Caco-2 (cell line): ENCODE measurements at regions of chr5 and their contacts with region 1.

Region 1: GRCh38 chr5:95864944-95865504 is 42.5 kb upstream of the GLRX start:
- DNase-seq: peak; percentile 75 to 88
- H3K4me3 ChIP-seq: no peak overlapping the region
- H3K4me3 Mint-ChIP-seq: peak overlapping the region; percentile 6
- H3K27ac Mint-ChIP-seq: peak overlapping the region; percentile 77
- H3K4me1 ChIP-seq: peaks cover 53% of the 10 kb centered on the region
- H3K4me1 Mint-ChIP-seq: peaks cover 39% of the 10 kb centered on the region
- H3K27me3 ChIP-seq: no peaks in the 10 kb centered on the region
- H3K27me3 Mint-ChIP-seq: no peaks in the 10 kb centered on the region
- CTCF ChIP-seq: no peak

Region 2: DNA sequence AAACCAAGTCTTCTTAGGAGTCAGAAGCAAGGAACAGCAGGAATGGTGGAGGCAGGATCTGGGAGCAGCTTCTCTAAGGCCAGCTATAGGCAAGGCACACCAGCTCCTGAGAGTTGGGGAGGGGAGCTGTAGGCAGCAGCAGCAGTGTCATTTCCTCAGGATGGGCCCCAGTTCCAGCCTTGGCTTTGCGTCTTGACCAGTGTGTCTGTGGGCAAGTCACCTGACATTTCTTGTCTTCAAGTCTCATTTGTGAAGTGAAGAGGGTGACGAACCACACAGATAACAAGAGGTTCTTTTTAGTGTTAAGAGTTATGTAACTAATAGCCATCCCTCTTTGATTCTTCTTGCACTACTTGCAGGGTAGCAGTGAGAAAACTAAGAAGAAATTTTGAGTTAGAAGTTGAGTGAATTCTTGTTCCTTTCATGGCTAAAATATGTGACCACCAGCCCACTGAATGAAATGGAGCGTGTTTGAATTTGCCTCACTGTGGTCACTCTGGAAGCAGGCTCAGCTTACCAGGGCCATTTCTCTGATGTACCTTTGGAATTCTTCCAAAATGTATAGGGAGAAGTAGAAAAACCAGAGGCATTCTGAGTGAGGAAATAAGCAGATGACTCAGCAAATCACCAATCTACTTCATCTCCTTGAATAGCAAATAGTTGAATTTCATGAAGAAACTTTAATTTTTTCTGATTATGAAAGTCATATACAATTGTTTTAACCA is 91.5 kb before region 1 on chr5:
- CTCF ChIA-PET with region 1: no interaction called
- POLR2A ChIA-PET with region 1: no interaction called
- intact Hi-C with region 1: no loop called
- DNase-seq: no peak
- H3K4me3 ChIP-seq: no peak overlapping the region
- H3K4me3 Mint-ChIP-seq: no peak overlapping the region
- H3K27ac Mint-ChIP-seq: no peak overlapping the region
- H3K4me1 ChIP-seq: no peaks in the 10 kb centered on the region
- H3K4me1 Mint-ChIP-seq: no peaks in the 10 kb centered on the region
- H3K27me3 ChIP-seq: no peaks in the 10 kb centered on the region
- H3K27me3 Mint-ChIP-seq: no peaks in the 10 kb centered on the region
- CTCF ChIP-seq: no peak

Region 3: GRCh38 chr5:95784514-95785302 is 80.3 kb before region 1 on chr5:
- CTCF ChIA-PET with region 1: no interaction called
- POLR2A ChIA-PET with region 1: no interaction called
- intact Hi-C with region 1: no loop called
- DNase-seq: no peak
- H3K4me3 ChIP-seq: no peak overlapping the region
- H3K4me3 Mint-ChIP-seq: no peak overlapping the region
- H3K27ac Mint-ChIP-seq: no peak overlapping the region
- H3K4me1 ChIP-seq: no peaks in the 10 kb centered on the region
- H3K4me1 Mint-ChIP-seq: peaks cover 6% of the 10 kb centered on the region
- H3K27me3 ChIP-seq: no peaks in the 10 kb centered on the region
- H3K27me3 Mint-ChIP-seq: no peaks in the 10 kb centered on the region
- CTCF ChIP-seq: no peak

Region 4: DNA sequence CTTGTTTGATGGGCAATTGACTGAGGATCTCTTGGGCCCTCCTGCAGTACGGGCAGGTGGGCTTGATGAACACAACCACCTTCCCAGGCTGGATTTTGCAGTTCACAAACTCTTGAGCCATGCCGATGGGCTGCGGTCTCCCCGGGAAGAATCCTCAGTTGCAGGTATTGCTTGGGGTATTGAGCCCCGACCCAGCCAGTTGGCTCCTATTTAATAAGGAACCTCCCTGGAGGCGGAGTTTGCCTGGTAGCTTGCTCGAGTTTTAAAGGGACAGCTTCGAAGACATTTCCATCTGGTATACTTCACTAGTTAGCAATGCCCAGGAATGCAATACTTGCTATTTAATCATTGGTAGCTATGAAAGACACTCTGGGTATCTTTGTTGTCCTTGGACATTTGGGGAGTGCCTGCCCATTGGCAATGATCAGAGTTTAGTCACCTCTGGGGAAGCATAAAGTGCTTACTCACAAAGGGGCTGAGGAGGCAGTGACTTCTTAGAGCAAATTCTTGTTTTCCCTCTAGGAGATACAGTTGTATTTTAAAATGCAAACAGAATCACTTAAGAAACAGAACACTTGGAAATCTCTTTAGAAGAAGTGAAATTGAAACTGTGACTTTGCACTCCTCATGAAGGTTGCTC is 42.4 kb before region 1 on chr5 and contains the start of gene GLRX:
- CTCF ChIA-PET with region 1: no interaction called
- POLR2A ChIA-PET with region 1: no interaction called
- intact Hi-C with region 1: no loop called
- DNase-seq: peak; percentile 69 to 70
- H3K4me3 ChIP-seq: peak within 1 kb of the TSS; percentile 59
- H3K4me3 Mint-ChIP-seq: peak within 1 kb of the TSS; percentile 82
- H3K27ac Mint-ChIP-seq: peak within 1 kb of the TSS; percentile 63
- H3K4me1 ChIP-seq: peaks cover 34% of the 10 kb centered on the region
- H3K4me1 Mint-ChIP-seq: peaks cover 21% of the 10 kb centered on the region
- H3K27me3 ChIP-seq: no peaks in the 10 kb centered on the region
- H3K27me3 Mint-ChIP-seq: no peaks in the 10 kb centered on the region
- CTCF ChIP-seq: no peak
- total RNA-seq, gene GLRX: 17.9 and 26.4 TPM in 2 replicates

Region 5: GRCh38 chr5:95878417-95879323 is 13.6 kb after region 1 on chr5:
- CTCF ChIA-PET with region 1: interaction called, 9 read pairs
- POLR2A ChIA-PET with region 1: interaction called, 10 read pairs
- intact Hi-C with region 1: loop called (anchors 1 kb)
- DNase-seq: peak; percentile 72 to 82
- H3K4me3 ChIP-seq: no peak overlapping the region
- H3K4me3 Mint-ChIP-seq: peak overlapping the region; percentile 17
- H3K27ac Mint-ChIP-seq: peak overlapping the region; percentile 80
- H3K4me1 ChIP-seq: peaks cover 43% of the 10 kb centered on the region
- H3K4me1 Mint-ChIP-seq: peaks cover 35% of the 10 kb centered on the region
- H3K27me3 ChIP-seq: no peaks in the 10 kb centered on the region
- H3K27me3 Mint-ChIP-seq: no peaks in the 10 kb centered on the region
- CTCF ChIP-seq: no peak

Region 6: DNA sequence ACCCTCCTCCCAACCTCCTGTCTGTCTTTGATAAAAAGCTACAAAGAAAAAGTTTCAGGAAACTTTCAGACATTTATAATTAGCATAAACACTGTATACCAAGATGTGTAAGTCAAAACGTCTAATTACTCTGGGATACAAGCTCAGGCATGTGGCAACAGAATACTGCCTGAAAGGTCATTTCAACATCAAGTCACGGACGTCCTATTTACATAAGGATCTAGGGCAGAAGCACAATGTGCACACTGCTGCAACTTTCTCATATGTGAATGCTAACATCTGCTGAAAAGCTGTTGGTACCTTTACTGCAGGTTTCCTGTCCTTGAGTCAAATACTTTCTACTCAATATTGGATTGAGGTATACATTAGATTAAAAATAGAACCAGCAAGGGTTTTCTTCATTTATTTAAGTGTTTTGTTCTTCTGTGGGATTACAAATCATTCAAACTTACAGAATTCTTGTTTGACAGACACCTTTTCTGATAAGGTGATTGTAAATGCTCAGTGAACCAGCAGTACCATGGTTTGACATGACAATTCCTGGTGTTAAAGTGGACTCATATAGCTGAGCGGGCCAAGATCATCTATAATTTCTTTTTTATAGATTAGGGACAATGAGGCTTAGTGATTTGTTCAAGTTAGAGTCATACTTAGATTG is 59.8 kb after region 1 on chr5:
- CTCF ChIA-PET with region 1: no interaction called
- POLR2A ChIA-PET with region 1: no interaction called
- intact Hi-C with region 1: loop called (anchors 1 kb)
- DNase-seq: peak; percentile 60 to 67
- H3K4me3 ChIP-seq: no peak overlapping the region
- H3K4me3 Mint-ChIP-seq: no peak overlapping the region
- H3K27ac Mint-ChIP-seq: no peak overlapping the region
- H3K4me1 ChIP-seq: peaks cover 25% of the 10 kb centered on the region
- H3K4me1 Mint-ChIP-seq: peaks cover 19% of the 10 kb centered on the region
- H3K27me3 ChIP-seq: no peaks in the 10 kb centered on the region
- H3K27me3 Mint-ChIP-seq: no peaks in the 10 kb centered on the region
- CTCF ChIP-seq: no peak

Region 7: GRCh38 chr5:95975703-95976102 is 110.7 kb after region 1 on chr5:
- CTCF ChIA-PET with region 1: no interaction called
- POLR2A ChIA-PET with region 1: no interaction called
- intact Hi-C with region 1: no loop called
- DNase-seq: no peak
- H3K4me3 ChIP-seq: no peak overlapping the region
- H3K4me3 Mint-ChIP-seq: no peak overlapping the region
- H3K27ac Mint-ChIP-seq: no peak overlapping the region
- H3K4me1 ChIP-seq: peaks cover 10% of the 10 kb centered on the region; the same call in 1 of the 2 replicates
- H3K4me1 Mint-ChIP-seq: peaks cover 14% of the 10 kb centered on the region
- H3K27me3 ChIP-seq: no peaks in the 10 kb centered on the region
- H3K27me3 Mint-ChIP-seq: no peaks in the 10 kb centered on the region
- CTCF ChIP-seq: no peak